ENCODE measurements at regions of chr18 and their contacts with region 1.

Region 1: DNA sequence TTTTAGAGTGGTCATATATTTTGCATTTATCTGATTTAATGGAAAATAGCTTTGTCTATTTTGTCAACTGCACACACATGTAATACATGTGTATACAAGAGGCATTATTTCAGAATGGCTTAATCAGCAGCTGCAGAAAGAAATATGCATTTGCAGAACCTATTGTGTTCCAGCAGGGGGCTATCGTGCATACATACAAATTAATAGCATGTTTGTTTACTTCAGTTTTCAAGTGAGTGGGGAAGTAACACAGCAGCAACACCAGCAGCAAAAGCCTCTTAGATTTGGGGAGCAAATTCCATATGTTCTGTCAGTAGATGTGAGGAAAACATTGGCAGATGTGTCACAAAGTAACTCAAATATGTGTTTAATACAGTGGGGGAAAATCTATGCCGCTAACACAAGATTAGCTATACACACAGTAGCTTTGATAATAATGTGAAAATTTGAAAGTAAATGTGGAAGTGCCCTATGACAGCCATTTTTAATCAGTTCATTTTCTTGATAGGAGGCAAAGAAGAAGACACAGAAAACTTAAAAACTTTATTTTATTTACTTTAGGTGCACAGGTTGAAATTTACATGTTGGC is 218.1 kb downstream of the WDR7 start:
- DNase-seq: no peak
- ATAC-seq: no peak
- H3K4me3 Mint-ChIP-seq: no peak overlapping the region
- H3K27ac Mint-ChIP-seq: no peak overlapping the region
- H3K4me1 Mint-ChIP-seq: no peaks in the 10 kb centered on the region
- H3K27me3 Mint-ChIP-seq: no peaks in the 10 kb centered on the region
- CTCF ChIP-seq: peak; percentile 38

Region 2: DNA sequence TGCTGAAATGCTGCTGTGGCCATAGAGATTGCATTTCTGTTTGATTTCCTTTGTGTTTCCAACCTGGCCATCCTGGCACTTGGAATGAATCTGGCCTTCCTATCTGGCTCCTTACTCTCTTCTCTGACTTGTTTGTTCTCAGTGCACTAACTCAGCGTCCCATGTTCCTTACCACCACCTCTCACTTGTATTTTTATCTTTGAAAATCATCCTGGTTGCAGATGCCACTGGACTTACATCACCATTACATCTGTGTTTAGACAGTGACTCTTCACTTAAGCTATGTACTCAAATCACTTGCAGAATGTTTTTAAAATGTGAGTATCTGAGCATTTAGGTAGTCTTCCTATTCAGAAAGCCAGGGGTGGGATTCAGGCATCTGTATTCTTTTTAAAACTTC is 21.3 kb after region 1 on chr18:
- CTCF ChIA-PET with region 1: no interaction called
- POLR2A ChIA-PET with region 1: no interaction called
- intact Hi-C with region 1: no loop called
- DNase-seq: no peak
- ATAC-seq: no peak
- H3K4me3 Mint-ChIP-seq: no peak overlapping the region
- H3K27ac Mint-ChIP-seq: no peak overlapping the region
- H3K4me1 Mint-ChIP-seq: no peaks in the 10 kb centered on the region
- H3K27me3 Mint-ChIP-seq: no peaks in the 10 kb centered on the region
- CTCF ChIP-seq: no peak

Region 3: DNA sequence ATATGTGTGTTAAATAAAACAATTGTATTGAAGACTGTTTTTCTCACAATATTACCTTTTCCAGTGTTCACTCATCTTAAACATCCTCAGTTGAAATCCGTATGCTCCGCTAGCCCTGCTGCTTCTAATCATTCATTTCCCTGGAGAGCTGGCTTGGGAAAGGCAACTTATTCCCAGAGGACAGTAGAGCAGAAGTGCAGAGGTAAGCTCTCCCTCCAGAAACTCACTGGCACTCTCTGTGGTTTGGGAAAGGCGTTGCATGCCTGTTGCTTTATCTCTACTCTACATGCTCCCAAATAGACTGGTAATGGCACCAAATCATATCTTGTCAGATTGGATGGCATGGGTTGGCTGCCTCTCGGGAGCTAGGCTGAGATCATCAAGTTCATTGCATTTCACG is 160.5 kb after region 1 on chr18:
- CTCF ChIA-PET with region 1: interaction called, 3 read pairs
- POLR2A ChIA-PET with region 1: no interaction called
- intact Hi-C with region 1: loop called (anchors 5 kb)
- DNase-seq: no peak
- ATAC-seq: no peak
- H3K4me3 Mint-ChIP-seq: no peak overlapping the region
- H3K27ac Mint-ChIP-seq: no peak overlapping the region
- H3K4me1 Mint-ChIP-seq: no peaks in the 10 kb centered on the region
- H3K27me3 Mint-ChIP-seq: peaks cover 2% of the 10 kb centered on the region
- CTCF ChIP-seq: no peak

Region 4: DNA sequence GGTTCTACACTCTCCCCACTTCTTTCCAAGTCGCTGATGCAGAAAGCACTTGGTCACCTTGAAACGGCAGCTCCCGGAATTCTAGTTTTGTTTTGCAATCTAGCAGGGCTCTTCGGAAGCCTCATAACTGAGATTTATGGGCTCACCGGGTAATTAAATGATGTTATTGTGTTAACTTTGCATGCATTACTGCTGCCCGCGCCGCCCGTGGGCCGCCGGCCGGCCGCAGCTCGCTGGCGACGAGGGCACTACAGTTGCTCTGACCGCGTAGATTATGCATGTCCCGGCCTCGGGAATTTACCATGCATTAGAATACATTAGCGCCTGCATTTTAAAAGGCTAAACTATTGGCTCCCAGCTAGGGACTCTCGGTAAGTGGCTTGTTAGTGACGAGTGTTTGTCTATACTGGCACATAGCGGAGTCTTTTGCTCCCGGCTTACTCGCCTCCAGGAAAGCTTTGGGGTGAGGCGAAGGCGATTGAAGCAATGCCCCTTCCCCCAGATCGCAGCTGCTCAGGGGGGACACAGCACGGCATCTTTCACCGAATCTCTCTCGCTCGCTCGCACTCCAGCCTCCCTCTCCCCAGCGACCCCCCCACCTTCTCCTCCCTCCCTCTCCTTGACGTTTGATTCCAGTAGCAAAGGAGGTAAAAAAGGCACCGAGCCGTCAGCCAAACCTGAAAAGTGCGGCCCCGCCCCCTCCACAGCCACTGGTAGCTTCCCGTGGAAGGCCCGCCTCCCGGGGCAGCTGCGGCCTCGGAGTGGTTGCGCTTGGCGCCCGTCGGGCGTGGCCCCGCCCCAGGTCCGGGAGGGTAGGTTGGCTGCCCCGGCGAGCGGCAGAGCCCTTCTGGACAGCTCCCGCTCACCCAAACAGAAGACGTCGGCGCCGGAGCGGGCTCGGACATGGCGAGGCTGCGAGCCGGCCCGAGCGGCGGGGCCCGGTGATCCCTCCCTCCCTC is 565.5 kb after region 1 on chr18 and contains the start of gene ONECUT2:
- CTCF ChIA-PET with region 1: no interaction called
- POLR2A ChIA-PET with region 1: no interaction called
- intact Hi-C with region 1: loop called (anchors 5 kb)
- DNase-seq: peak; percentile 36
- ATAC-seq: peak; percentile 93
- H3K4me3 Mint-ChIP-seq: peak within 1 kb of the TSS; percentile 61
- H3K27ac Mint-ChIP-seq: no peak within 1 kb of the TSS
- H3K4me1 Mint-ChIP-seq: peaks cover 35% of the 10 kb centered on the region
- H3K27me3 Mint-ChIP-seq: peaks cover 77% of the 10 kb centered on the region
- CTCF ChIP-seq: no peak
- total RNA-seq, gene ONECUT2: not detected in 2 replicates

Measured in activated B cell treated with CpG ODN at 0.5 μM for 24 hours (primary cell).